ENCODE measurements at regions of chr18 and their contacts with region 1.

Region 1: DNA sequence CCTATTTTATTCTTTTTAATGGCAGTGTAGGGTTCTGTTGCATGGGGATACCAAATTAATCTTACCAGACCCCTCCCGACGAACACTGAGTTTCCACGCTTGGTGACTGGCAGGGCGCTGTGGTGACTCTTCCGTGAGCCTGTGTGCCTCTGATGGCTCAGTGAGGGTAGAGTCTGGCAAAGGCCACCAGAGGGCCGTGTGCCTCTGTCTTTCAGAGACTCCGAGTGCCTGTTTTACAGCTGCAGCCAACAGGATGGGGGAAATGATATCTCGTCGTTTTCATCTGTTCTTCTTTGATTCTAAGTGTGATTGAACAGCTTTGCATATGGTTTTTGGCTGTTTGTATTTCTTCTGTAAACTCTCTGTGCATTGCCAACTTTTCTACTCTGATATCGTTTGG is 99.8 kb downstream of the ZNF236 start:
- DNase-seq: peak in 2 of 3 donors; percentile 70 to 73
- ATAC-seq: peak; percentile 98
- H3K4me3 ChIP-seq: no peak overlapping the region
- H3K4me1 ChIP-seq: no peaks in the 10 kb centered on the region
- CTCF ChIP-seq: peak; percentile 33

Region 2: GRCh38 chr18:76783759-76784484 is 138.2 kb before region 1 on chr18:
- intact Hi-C with region 1: no loop called
- DNase-seq: no peak
- ATAC-seq: no peak
- H3K4me3 ChIP-seq: no peak overlapping the region
- H3K4me1 ChIP-seq: no peaks in the 10 kb centered on the region
- CTCF ChIP-seq: no peak

Region 3: GRCh38 chr18:76982841-76983587 is 60.9 kb after region 1 on chr18:
- intact Hi-C with region 1: loop called (anchors 5 to 10 kb)
- DNase-seq: peak; percentile 92 to 95 (median 94)
- ATAC-seq: peak; percentile 89
- H3K4me3 ChIP-seq: no peak overlapping the region
- H3K4me1 ChIP-seq: peaks cover 19% of the 10 kb centered on the region
- CTCF ChIP-seq: peak; percentile 92